ENCODE measurements at regions of chr1 and their contacts with region 1.

Region 1: DNA sequence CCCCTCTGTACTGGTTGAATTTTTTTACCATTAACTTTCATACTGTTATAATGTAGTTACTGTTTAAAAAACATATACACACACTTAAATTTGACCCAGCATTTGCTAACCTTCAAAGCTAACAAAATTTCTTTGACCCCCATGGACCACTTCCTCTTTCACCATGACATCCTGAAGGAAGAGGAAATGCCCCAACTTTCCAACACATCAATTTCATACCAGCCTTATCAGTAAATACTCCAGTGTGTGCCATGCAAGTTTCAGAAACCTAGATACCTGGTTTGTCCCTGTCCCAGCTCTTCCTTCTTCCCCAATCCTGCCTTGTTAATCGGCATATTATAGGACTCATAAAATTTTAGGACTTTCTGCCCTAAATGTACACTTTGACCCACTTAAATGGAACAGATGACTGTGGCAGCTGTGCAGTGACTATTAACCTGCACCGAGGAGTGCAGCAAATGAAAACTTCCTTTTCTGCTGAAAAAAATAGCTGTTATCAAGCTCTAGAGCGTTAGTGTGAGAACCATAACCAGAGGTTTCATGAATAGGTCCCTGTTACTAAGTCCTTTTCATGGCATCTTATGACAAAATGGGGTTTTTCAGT is 54.1 kb downstream of the DTL start:
- DNase-seq: no peak
- ATAC-seq: peak; percentile 68
- H3K4me3 ChIP-seq: no peak overlapping the region
- H3K27ac ChIP-seq: peak overlapping the region; percentile 22; the same call in 1 of the 2 replicates
- H3K4me1 ChIP-seq: peaks cover 3% of the 10 kb centered on the region; the same call in 1 of the 2 replicates
- H3K27me3 ChIP-seq: no peaks in the 10 kb centered on the region
- CTCF ChIP-seq: no peak
- EP300 ChIP-seq: peak in 1 of 2 experiments; percentile 53; a peak in 1 of 4 replicates
- POLR2A ChIP-seq: no peak
- RAD21 ChIP-seq: no peak

Region 2: DNA sequence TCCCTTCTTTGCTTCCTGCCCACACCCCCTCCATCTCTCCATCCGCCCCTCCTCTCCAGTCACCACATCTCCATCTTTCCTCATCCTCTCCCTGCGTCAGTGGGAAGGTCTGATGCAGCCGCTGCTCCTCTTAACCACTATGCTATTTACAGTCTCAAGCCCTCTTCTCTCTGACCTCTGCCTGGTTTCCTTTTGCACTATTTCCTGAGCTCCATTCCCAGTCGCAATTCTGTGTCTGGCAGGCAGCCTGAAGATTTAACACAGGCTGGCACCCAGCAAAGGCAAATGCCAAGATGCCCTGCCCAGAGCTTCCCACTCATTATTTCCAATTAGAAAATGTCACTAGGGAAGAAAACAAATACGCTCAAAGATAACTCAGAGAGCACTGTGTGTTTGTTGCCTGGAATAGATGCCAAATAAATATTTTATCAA is 169.5 kb before region 1 on chr1:
- CTCF ChIA-PET with region 1: no interaction called
- POLR2A ChIA-PET with region 1: no interaction called
- RAD21 ChIA-PET with region 1: no interaction called
- SMC1A ChIA-PET with region 1: no interaction called
- in situ Hi-C with region 1: no loop called
- intact Hi-C with region 1: no loop called
- DNase-seq: no peak
- ATAC-seq: no peak
- H3K4me3 ChIP-seq: no peak overlapping the region
- H3K27ac ChIP-seq: no peak overlapping the region
- H3K4me1 ChIP-seq: no peaks in the 10 kb centered on the region
- H3K27me3 ChIP-seq: no peaks in the 10 kb centered on the region
- CTCF ChIP-seq: no peak
- EP300 ChIP-seq: no peak
- POLR2A ChIP-seq: no peak
- RAD21 ChIP-seq: no peak

Region 3: GRCh38 chr1:212104586-212105325 is 15.1 kb after region 1 on chr1:
- CTCF ChIA-PET with region 1: interaction called, 4 read pairs
- POLR2A ChIA-PET with region 1: interaction called, 4 read pairs
- RAD21 ChIA-PET with region 1: no interaction called
- SMC1A ChIA-PET with region 1: interaction called, 21 read pairs
- in situ Hi-C with region 1: no loop called
- intact Hi-C with region 1: no loop called
- DNase-seq: no peak
- ATAC-seq: no peak
- H3K4me3 ChIP-seq: no peak overlapping the region
- H3K27ac ChIP-seq: no peak overlapping the region
- H3K4me1 ChIP-seq: no peaks in the 10 kb centered on the region
- H3K27me3 ChIP-seq: no peaks in the 10 kb centered on the region
- CTCF ChIP-seq: no peak
- EP300 ChIP-seq: no peak
- POLR2A ChIP-seq: no peak
- RAD21 ChIP-seq: no peak